ENCODE measurements at regions of chr3 and their contacts with region 1.

Region 1: DNA sequence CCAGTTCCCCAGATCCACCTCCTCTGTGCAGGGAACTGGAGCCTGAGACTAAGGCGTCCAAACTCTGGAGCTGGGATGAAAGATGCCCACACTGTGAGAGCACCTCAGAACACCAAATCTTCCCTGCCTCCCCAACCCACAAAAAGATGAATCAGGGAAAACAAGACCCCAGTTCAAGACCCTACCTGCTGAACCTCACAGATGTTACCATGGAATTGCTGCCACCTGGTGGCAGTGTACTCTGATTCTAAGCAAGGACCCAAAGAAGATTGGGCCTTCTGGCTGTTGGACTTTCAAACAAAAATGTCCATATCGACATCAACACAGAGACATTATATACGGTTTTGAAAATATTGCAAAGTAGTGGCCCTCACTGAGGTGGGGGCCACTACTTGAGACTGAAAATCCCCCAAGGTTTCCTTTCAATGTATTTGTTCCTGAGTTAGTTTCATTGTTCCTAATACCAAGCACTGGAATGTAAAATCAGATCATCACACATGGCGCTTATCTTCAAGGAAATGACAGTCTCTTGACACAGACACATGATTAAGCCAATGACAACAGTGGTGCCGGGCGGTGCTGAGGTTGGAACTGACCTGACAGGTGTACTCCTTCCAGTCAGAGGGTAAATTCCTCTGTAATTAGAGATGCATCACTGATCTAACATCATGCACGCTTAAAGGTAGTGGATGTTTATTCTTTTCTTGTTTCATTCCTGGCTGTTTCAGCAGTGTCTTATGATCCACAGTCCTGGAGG is 67.6 kb downstream of the SLC6A11 start:
- DNase-seq: no peak
- H3K4me3 ChIP-seq: no peak overlapping the region
- H3K27ac ChIP-seq: no peak overlapping the region
- H3K4me1 ChIP-seq: no peaks in the 10 kb centered on the region
- H3K27me3 ChIP-seq: peaks cover 0 to 9% (median 0%) of the 10 kb centered on the region in 4 donors
- CTCF ChIP-seq: peak in 5 of 6 experiments; percentile 35 to 64 (median 38)
- POLR2A ChIP-seq: no peak

Region 2: DNA sequence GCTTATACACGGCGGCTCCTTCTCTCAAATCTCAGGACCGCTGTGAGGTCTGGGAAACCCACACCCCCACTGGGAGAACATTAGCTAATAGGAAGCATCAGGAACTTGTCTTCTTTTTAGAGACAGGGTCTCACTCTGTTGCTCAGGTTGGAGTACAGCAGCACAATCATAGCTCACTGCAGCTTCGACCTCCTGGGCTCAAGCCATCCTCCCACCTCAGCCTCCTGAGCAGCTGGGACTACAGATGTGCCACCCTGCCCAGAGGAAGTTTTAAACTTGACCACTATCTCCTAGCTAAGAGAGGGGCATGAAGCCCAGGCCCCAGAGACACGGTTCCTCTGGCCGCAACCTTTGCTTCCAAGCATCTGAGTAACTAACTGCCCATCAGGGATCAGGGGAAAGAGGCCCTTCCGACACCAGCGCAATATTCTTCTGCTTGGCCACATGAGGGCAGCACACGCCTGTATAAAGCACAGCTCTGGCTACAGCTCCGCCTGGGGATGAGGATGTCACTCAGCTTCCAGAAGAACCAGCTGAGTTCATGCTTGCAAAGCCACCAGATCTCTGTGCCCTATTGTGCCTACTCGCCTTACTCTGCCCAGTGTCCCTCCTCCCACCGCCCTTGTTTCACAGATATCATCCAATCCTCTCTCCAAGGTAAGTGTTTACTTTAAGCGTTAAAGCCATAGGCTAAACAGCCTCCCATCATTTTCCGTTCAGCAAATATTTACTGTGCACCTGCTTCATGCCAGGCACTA is 125.2 kb before region 1 on chr3:
- intact Hi-C with region 1: loop called (anchors 10 kb)
- DNase-seq: no peak
- H3K4me3 ChIP-seq: no peak overlapping the region
- H3K27ac ChIP-seq: no peak overlapping the region
- H3K4me1 ChIP-seq: peaks cover 0 to 6% (median 0%) of the 10 kb centered on the region in 3 donors
- H3K27me3 ChIP-seq: peaks cover 0 to 94% (median 0%) of the 10 kb centered on the region in 4 donors
- CTCF ChIP-seq: peak in 5 of 6 experiments; percentile 58 to 88 (median 72)
- POLR2A ChIP-seq: no peak

Region 3: GRCh38 chr3:10772271-10773161 is 111.1 kb before region 1 on chr3:
- intact Hi-C with region 1: no loop called
- DNase-seq: no peak
- H3K4me3 ChIP-seq: no peak overlapping the region
- H3K27ac ChIP-seq: no peak overlapping the region
- H3K4me1 ChIP-seq: peaks cover 0 to 7% (median 0%) of the 10 kb centered on the region in 3 donors
- H3K27me3 ChIP-seq: peaks cover 0 to 70% (median 0%) of the 10 kb centered on the region in 4 donors
- CTCF ChIP-seq: peak in 5 of 6 experiments; percentile 21 to 82 (median 39)
- POLR2A ChIP-seq: no peak

Region 4: DNA sequence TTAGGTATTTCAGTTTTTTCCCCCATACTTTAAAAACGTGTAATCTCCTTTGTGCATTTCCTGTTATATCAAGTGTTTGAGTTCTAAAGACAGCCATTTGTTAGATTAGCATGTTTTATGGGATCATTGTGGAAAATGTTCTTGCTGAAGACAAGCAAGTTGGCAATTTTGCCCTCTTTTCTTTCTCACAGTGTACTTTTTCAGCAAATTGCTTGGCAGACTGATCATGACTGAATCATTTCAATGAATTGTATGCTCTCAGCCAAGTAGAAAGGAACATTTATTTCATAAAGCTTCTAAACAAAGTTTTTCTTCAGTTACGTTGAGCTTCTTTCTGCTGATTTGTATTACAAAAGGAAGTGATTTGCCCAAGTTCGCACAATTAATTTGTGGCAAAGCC is 440.2 kb after region 1 on chr3:
- intact Hi-C with region 1: no loop called
- DNase-seq: no peak
- H3K4me3 ChIP-seq: no peak overlapping the region
- H3K27ac ChIP-seq: peak overlapping the region; percentile 13 to 66 (median 62)
- H3K4me1 ChIP-seq: peaks cover 0 to 21% (median 0%) of the 10 kb centered on the region in 3 donors
- H3K27me3 ChIP-seq: no peaks in the 10 kb centered on the region
- CTCF ChIP-seq: no peak
- POLR2A ChIP-seq: no peak

Measured in esophagus squamous epithelium (tissue), 5 donors.